ENCODE measurements at regions of chr17 and their contacts with region 1.

Region 1: DNA sequence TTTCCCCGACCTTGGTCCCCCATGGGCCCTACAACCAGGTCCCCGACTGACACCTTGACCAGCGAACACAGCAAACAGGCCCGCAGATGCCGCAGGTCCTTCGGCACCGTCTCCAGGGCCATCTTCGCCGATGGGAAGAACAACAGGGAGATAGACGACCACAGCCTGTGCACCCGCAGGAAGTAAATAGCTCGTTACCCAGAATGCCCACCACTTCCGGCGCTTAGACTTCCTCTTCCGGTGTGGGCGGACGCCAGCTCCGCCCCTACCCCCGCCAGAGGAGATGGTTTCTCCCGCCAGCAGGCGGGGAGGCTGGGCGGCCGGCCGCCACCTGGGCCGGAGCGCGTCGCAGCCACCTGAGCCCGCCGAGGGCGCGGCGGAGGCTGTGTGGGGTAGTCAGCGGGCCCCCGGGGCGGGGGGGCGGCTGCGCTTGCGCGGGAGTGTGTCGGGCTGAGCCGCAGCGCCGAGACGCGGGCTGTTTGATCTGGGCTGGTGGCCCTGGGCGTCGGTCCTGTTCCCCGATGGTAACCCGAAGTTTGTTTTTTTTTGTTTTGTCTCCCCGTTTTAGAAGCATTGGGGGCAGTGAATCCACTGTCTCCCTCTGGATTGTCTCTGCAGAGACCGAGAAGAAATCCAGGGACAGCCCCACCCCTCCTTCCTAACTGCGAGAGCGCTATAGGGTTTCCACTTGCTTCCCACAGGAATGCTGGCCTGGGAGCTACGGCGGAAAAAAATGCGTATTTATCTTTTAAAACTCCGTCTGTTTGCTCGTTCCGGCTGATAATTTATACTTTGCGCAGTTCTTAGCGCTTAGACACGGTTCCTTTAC is at the start of gene SUPT4H1:
- DNase-seq: peak; percentile 89 to 92
- H3K4me3 ChIP-seq: peak within 1 kb of the TSS; percentile 86
- H3K4me1 ChIP-seq: peaks cover 4% of the 10 kb centered on the region; the same call in 1 of the 2 replicates
- H3K27me3 ChIP-seq: no peaks in the 10 kb centered on the region

Region 2: GRCh38 chr17:58232707-58233156 is 119.5 kb before region 1 on chr17:
- in situ Hi-C with region 1: no loop called
- DNase-seq: no peak
- H3K4me3 ChIP-seq: no peak overlapping the region
- H3K4me1 ChIP-seq: no peaks in the 10 kb centered on the region
- H3K27me3 ChIP-seq: peaks cover 40% of the 10 kb centered on the region

Region 3: DNA sequence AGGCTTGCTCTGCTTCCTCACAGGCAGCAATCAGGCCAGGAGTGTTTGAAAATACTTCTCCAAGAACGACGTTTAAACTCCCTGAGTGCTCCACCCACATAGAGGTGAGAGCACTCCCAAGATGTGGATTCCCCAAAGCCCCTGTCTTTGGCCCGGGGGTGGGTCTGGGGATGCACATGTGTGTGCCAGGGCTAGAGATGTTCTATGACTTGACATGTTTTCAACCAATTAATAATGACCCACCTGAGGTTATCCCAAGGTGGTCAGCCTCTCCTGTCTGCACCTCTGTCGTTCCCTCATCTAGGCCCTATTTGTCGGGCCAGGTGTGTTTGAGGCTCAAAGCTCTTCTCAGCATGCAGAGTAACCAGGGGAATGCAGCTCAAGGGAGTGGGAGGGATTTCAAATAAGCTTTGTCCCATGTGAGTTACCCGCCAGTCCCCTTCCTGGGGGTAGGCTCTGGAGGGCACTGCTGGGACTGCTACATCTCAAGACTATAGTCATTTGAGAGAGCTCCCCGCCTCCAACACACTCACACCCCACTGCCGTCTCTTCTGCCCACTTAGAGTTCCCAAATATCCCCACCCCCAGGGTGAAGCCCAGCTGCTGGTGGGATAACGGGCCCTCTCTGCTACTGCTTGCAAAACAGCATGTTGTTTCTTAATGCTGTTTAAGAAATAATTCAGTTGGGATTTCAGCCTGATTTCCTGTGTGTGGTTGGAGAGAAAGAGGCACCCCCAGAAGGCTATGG is 67.7 kb before region 1 on chr17:
- in situ Hi-C with region 1: no loop called
- DNase-seq: no peak
- H3K4me3 ChIP-seq: no peak overlapping the region
- H3K4me1 ChIP-seq: no peaks in the 10 kb centered on the region
- H3K27me3 ChIP-seq: peaks cover 7% of the 10 kb centered on the region; the same call in 1 of the 2 replicates

Region 4: DNA sequence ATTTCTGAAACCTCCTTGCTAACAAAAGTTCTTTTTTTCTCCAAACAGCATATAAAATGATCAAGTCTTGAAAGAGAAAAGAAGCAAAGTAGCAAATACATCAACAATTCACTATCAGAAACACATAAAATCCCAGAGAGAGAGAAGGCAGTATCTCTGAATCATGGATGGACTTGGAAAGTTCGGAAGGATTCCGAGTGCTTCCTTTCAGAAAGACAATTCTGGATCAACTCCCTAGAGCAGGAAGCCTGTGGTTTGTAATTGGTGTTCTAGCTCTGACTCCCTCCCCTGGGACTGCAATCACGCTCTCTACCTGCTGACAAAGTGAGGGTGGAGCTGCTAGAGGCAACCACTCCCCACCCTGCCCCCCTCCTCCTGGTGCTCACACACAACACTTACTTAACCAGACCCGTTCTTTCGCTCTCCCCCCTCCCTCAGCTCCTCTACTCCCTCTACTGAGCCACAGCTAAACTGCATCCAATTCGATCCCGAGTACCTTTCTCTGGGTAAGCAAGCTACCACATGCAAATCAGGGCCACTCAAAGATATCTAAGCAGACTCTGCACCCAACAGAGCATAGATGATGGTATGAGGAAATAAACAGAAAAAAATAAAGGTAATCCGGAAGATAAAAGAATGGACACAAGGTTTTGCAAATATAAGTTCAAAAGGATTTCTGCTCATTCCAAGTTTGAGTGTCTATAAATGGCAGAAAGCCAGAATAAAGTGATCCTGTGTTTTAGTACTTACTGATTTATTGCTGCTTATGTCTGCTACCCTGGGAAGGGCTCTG is 65.3 kb after region 1 on chr17 and contains the start of gene RNF43:
- in situ Hi-C with region 1: loop called (anchors 5 kb)
- DNase-seq: peak; percentile 94 to 96
- H3K4me3 ChIP-seq: peak within 1 kb of the TSS; percentile 12
- H3K4me1 ChIP-seq: peaks cover 12% of the 10 kb centered on the region
- H3K27me3 ChIP-seq: peaks cover 33% of the 10 kb centered on the region

Region 5: GRCh38 chr17:58487589-58488427 is 135.6 kb after region 1 on chr17 and contains the start of gene HSF5:
- in situ Hi-C with region 1: no loop called
- DNase-seq: no peak
- H3K4me3 ChIP-seq: no peak within 1 kb of the TSS
- H3K4me1 ChIP-seq: no peaks in the 10 kb centered on the region
- H3K27me3 ChIP-seq: no peaks in the 10 kb centered on the region

Measured in HAP-1 (cell line).